ENCODE measurements at regions of chr12 and their contacts with region 1.

Region 1: DNA sequence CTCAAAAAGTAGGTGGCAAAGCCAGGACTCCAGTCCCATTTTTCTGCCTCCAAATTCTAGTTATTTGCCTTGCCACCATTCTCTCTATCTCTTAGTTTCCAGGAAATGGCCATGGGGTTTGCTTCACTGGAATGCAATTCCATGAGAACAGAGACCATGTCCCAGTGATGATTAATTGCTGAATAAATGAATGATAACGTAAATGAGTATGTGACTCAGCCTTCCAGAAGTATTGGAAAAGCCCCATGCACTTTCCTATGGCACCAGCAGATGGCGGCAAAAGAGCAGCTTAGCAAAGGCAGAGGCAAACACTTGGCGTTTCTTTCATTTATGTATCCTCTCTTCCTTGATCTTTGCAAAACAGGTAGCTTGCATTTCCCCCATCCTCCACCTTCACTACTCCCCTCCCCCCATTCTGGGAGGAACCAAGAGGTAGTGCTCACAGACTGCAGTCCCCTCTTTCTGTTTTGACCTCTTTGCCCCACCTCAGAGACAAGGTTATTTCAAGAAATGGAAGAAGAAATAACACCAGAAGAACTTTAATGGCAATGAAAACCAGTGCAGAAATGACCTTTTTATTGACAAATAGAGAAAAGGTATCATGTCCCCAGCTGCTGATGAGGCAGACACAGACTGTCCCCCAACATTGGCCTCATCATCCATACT is 21.3 kb downstream of the TBX3 start:
- DNase-seq: peak in 4 of 5 donors; percentile 55 to 69 (median 64)
- ATAC-seq: peak in 3 of 4 donors; percentile 31 to 63 (median 50)
- H3K4me3 ChIP-seq: no peak overlapping the region
- H3K27ac ChIP-seq: no peak overlapping the region
- H3K4me1 ChIP-seq: peaks cover 0 to 20% (median 4%) of the 10 kb centered on the region in 12 donors
- H3K27me3 ChIP-seq: peaks cover 24 to 70% (median 37%) of the 10 kb centered on the region in 9 donors
- CTCF ChIP-seq: peak; percentile 89 to 96 (median 94)
- POLR2A ChIP-seq: no peak

Region 2: GRCh38 chr12:114848666-114849065 is 186.0 kb after region 1 on chr12:
- intact Hi-C with region 1: no loop called
- DNase-seq: no peak
- ATAC-seq: peak in 3 of 4 donors; percentile 20 to 64 (median 32)
- H3K4me3 ChIP-seq: no peak overlapping the region
- H3K27ac ChIP-seq: no peak overlapping the region
- H3K4me1 ChIP-seq: peaks cover 0 to 5% (median 0%) of the 10 kb centered on the region in 12 donors
- H3K27me3 ChIP-seq: no peaks in the 10 kb centered on the region
- CTCF ChIP-seq: no peak
- POLR2A ChIP-seq: no peak

Region 3: GRCh38 chr12:115166698-115167315 is 504.2 kb after region 1 on chr12:
- intact Hi-C with region 1: loop called in 4 of 10 experiments (anchors 5 to 10 kb)
- DNase-seq: peak in 1 of 5 donors; percentile 11
- ATAC-seq: peak in 1 of 4 donors; percentile 50
- H3K4me3 ChIP-seq: no peak overlapping the region
- H3K27ac ChIP-seq: no peak overlapping the region
- H3K4me1 ChIP-seq: no peaks in the 10 kb centered on the region
- H3K27me3 ChIP-seq: no peaks in the 10 kb centered on the region
- CTCF ChIP-seq: peak in 9 of 12 donors; percentile 14 to 60 (median 38)
- POLR2A ChIP-seq: no peak

Region 4: DNA sequence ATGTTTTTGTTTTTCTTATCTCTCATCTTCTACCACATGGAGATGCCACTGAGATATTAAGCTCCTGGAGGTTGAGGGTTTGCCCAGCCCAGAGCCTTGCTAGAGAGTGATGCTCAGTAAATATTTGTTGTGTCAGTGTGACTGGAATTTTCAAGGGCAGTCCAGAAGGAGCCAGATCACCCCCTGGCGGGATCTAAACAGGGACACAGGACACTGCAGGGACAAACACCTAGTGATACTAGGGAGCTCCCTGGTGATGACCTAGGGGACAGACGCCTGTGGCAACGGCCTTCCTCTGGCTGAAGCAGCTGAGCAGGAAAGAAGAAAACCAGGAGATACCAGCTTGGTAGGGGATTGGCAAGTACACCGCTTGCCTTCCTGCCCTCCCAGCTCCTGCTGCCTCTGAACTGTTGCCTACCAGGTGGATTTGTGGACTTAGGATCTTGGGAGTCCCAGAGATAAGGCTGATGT is 735.7 kb after region 1 on chr12:
- intact Hi-C with region 1: loop called in 2 of 10 experiments (anchors 10 kb)
- DNase-seq: no peak
- ATAC-seq: peak in 3 of 4 donors; percentile 46 to 60 (median 58)
- H3K4me3 ChIP-seq: no peak overlapping the region
- H3K27ac ChIP-seq: no peak overlapping the region
- H3K4me1 ChIP-seq: no peaks in the 10 kb centered on the region
- H3K27me3 ChIP-seq: no peaks in the 10 kb centered on the region
- CTCF ChIP-seq: peak in 6 of 12 donors; percentile 8 to 39 (median 20)
- POLR2A ChIP-seq: no peak

Region 5: GRCh38 chr12:115632308-115632707 is 969.7 kb after region 1 on chr12:
- intact Hi-C with region 1: loop called in 8 of 10 experiments (anchors 5 to 10 kb)
- DNase-seq: no peak
- ATAC-seq: no peak
- H3K4me3 ChIP-seq: no peak overlapping the region
- H3K27ac ChIP-seq: no peak overlapping the region
- H3K4me1 ChIP-seq: no peaks in the 10 kb centered on the region
- H3K27me3 ChIP-seq: no peaks in the 10 kb centered on the region
- CTCF ChIP-seq: peak in 11 of 12 donors; percentile 12 to 56 (median 36)
- POLR2A ChIP-seq: no peak

Measured in heart left ventricle (tissue), 16 donors.